ENCODE measurements at regions of chr5 and their contacts with region 1.

Region 1: DNA sequence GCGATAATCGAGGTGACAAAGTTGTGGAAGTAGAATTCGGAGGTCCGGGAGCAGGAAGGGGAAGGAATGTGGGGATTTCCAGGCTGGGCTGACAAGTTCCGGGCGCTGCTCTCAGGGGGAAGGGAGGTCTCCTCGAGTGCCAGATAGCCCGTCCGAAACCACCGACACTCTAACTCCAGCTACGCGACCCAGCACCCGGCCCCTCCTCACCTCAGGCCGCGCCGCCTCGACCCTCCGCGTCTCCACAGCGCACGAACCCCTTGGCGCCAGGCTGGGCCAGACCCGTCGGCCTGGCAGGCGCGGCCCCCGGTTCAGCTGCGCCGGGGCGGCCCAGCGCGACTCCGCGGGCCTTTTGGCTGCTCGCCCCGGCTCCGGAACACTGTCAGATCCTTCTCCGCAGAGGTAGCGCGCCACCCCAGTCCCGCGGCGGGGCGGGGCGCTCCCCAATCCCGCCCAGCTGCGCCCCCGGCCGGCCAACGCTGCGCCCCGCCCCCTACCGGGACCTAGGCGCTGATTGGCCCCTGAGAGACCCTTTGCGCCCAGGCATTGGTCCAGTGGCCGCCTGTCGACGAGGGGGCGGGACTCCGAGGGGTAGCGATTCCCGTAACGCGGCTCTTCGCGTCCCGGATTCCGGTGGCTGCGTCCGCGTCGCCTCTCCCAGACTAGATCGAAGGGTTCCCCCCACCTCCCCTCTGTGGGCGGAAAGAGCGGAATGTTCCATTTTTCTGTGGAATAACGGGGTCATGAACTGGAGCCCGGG is at the start of gene IL6ST:
- DNase-seq: peak; percentile 97
- H3K4me3 Mint-ChIP-seq: peak within 1 kb of the TSS; percentile 99
- H3K27ac Mint-ChIP-seq: peak within 1 kb of the TSS; percentile 100
- H3K4me1 Mint-ChIP-seq: peaks cover 56% of the 10 kb centered on the region
- H3K27me3 Mint-ChIP-seq: no peaks in the 10 kb centered on the region
- total RNA-seq, gene IL6ST: 61.0 to 64.1 TPM

Region 2: GRCh38 chr5:55534436-55535198 is 460.1 kb before region 1 on chr5 and contains the start of gene PLPP1:
- CTCF ChIA-PET with region 1: no interaction called
- POLR2A ChIA-PET with region 1: no interaction called
- intact Hi-C with region 1: loop called (anchors 2 kb)
- DNase-seq: peak; percentile 89
- H3K4me3 Mint-ChIP-seq: peak within 1 kb of the TSS; percentile 85
- H3K27ac Mint-ChIP-seq: peak within 1 kb of the TSS; percentile 77
- H3K4me1 Mint-ChIP-seq: peaks cover 24% of the 10 kb centered on the region
- H3K27me3 Mint-ChIP-seq: no peaks in the 10 kb centered on the region
- total RNA-seq, gene PLPP1: 6.7 to 7.2 TPM

Region 3: DNA sequence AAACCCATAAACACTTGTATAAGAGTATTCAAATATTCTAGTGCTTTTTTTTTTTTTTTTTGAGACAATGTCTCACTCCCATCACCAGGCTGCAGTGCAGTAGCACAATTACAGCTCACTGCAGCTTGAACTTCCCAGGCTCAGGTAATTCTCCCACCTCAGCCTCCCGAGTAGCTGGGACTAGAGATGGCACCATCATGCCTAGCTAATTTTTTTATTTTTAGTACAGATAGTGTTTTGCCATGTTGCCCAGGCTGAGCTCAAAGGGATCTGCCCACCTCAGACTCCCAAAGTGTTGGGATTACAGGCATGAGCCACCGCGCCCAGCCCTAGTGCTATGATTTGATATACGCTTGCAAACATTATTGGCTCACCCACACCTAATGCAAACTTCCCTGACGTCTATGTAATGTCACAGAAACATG is 11.8 kb before region 1 on chr5:
- CTCF ChIA-PET with region 1: interaction called, 7 read pairs
- POLR2A ChIA-PET with region 1: interaction called, 11 read pairs
- intact Hi-C with region 1: loop called (anchors 1 kb)
- DNase-seq: no peak
- H3K4me3 Mint-ChIP-seq: peak overlapping the region; percentile 20
- H3K27ac Mint-ChIP-seq: peak overlapping the region; percentile 64
- H3K4me1 Mint-ChIP-seq: peaks cover 80% of the 10 kb centered on the region
- H3K27me3 Mint-ChIP-seq: no peaks in the 10 kb centered on the region

Region 4: DNA sequence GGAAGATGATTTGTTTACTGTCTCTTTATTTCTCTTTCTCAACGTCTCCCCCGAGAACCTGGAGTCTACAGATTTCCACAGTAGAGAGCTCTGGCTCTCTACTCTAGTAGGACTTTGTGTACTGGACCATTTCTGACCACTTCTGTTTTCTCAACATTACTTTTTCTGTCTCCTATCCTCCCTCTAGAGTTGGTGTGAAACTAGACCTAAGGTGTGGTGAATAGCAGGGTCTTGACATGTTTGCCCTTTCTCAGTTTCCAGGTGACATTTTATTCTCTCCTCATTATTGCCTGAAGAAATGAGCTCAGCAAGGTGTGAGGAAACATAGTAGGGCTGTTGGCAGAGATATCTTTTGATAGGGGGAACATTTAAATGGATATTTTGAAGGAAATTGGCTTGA is 62.1 kb after region 1 on chr5:
- CTCF ChIA-PET with region 1: no interaction called
- POLR2A ChIA-PET with region 1: interaction called, 6 read pairs
- intact Hi-C with region 1: loop called (anchors 1 kb)
- DNase-seq: no peak
- H3K4me3 Mint-ChIP-seq: no peak overlapping the region
- H3K27ac Mint-ChIP-seq: peak overlapping the region; percentile 4
- H3K4me1 Mint-ChIP-seq: peaks cover 61% of the 10 kb centered on the region
- H3K27me3 Mint-ChIP-seq: peaks cover 1% of the 10 kb centered on the region

Region 5: DNA sequence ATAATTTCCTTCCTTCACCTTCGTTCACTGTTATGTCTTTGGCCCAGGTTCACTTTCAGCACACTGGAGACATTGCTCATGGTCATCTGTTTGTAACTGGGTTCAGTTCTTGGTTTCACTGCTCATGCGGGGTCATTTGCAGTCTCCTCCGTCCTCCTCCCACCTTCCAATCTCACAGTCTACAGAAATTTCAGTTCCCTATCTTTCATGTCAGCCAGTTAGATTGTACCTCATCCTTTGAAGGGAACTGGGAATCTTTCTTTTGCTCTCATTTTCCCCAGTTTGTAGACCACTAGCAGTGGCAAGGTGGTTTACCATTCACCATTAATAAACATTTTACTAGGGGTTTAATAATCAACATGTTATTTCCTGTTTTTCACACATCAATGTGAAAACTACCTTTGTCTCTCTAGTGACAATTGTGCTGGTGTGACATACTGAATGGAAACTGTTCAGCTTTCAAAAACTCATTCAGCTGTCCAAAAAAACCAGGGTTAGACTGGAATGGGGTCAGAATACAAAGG is 100.9 kb after region 1 on chr5:
- CTCF ChIA-PET with region 1: interaction called, 4 read pairs
- POLR2A ChIA-PET with region 1: interaction called, 4 read pairs
- intact Hi-C with region 1: loop called (anchors 2 kb)
- DNase-seq: no peak
- H3K4me3 Mint-ChIP-seq: peak overlapping the region; percentile 1
- H3K27ac Mint-ChIP-seq: peak overlapping the region; percentile 63
- H3K4me1 Mint-ChIP-seq: peaks cover 83% of the 10 kb centered on the region
- H3K27me3 Mint-ChIP-seq: no peaks in the 10 kb centered on the region

Region 6: DNA sequence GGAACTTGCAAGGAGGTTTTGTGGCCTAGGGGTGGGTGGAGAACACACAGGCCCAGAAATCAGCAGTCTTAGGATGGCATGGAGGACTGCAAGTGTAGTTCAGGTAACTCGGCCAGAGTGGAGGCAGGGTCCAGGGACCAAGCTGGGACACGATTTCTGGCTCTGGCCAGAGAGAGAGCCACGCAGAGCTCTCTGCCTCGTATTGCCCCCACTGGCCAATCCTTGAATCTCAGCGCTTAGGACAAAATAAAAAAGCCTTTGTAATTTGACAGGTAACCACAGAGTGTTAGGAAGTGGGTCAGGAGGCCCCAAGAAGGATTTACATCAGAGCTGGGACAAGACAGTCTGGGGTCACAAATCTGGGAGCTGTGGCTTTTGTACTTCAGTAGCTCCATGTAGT is 832.3 kb after region 1 on chr5:
- CTCF ChIA-PET with region 1: interaction called, 5 read pairs
- POLR2A ChIA-PET with region 1: no interaction called
- intact Hi-C with region 1: loop called (anchors 10 kb)
- DNase-seq: peak; percentile 25
- H3K4me3 Mint-ChIP-seq: peak overlapping the region; percentile 2
- H3K27ac Mint-ChIP-seq: peak overlapping the region; percentile 80
- H3K4me1 Mint-ChIP-seq: peaks cover 90% of the 10 kb centered on the region
- H3K27me3 Mint-ChIP-seq: no peaks in the 10 kb centered on the region

Measured in activated CD4-positive, alpha-beta memory T cell treated with anti-CD3 and anti-CD28 coated beads for 36 hours (primary cell).